Cardiac septum (tissue), 1 donor: ENCODE measurements at regions of chr20 and their contacts with region 1.

Region 1: DNA sequence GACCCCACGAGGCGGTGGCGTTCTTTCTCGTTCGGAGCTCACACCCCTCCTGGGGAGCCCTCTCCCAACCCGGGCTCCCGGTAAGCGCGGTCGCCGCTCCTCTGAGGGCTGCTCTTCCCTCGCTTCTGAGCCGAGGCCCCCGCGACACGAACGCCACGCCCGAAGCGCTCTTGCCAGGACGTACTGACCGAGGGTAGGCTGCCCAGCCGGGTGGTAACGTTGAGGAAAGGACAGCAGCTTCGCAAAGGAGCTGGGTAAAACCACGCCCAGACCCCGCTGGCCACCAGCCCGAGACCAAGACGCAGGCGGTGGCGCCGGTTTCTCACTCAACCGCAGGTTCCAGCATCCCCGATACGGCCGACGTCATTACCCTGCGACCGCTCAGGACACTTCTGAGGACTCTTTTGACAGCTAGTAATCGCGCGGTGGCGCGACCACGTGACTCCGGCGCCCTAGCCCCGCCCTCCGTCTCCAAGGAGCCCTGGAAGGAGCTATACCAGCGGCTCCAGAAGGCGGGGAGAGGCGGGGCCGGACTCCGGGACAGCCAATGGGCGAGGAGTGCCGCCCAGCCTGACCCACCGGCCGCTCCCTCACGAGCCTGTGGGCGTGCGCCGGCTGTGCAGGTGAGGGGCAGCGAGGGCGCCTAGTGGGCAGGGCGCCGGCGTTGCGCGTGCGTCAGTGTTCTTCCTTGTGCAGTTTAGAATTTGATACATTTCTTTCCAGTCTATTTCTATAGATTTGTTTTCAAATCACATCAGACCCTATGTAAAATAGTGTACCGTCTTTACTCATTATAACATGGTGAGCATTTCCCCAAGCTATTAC is 4.0 kb upstream of the GZF1 start:
- DNase-seq: peak; percentile 100

Region 2: DNA sequence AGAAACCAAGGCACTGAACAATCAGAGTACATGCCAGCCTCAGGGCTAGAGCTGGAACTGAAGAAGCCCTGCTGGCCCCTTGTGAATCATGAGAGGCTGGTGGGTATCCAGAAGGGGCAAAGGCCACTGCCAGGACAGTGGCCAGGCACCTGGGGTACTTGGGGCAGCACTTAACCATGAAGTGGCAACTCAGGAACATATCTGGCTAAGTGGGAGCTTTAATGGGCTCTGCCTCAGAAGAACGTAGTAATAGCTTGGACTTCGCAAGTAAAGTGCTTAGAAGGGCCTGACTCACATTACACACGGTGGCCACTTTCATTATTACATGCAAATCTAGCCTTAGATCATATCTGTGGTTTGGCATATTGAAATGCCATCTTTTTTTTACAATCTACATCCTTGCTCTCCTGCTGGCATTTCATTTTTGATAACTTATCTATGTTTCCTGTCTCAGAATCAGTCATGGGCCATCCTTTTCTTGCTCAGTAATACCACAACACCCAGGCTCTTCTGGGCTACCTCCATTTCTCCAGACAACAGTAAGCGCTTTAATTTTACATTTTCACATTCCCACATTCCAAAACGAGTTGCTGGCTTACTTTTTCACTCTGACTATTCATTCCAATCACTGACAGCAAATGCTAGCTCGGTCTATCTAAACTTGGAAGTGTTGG is 41.7 kb after region 1 on chr20:
- intact Hi-C with region 1: loop called (anchors 5 kb)
- DNase-seq: no peak

Region 3: DNA sequence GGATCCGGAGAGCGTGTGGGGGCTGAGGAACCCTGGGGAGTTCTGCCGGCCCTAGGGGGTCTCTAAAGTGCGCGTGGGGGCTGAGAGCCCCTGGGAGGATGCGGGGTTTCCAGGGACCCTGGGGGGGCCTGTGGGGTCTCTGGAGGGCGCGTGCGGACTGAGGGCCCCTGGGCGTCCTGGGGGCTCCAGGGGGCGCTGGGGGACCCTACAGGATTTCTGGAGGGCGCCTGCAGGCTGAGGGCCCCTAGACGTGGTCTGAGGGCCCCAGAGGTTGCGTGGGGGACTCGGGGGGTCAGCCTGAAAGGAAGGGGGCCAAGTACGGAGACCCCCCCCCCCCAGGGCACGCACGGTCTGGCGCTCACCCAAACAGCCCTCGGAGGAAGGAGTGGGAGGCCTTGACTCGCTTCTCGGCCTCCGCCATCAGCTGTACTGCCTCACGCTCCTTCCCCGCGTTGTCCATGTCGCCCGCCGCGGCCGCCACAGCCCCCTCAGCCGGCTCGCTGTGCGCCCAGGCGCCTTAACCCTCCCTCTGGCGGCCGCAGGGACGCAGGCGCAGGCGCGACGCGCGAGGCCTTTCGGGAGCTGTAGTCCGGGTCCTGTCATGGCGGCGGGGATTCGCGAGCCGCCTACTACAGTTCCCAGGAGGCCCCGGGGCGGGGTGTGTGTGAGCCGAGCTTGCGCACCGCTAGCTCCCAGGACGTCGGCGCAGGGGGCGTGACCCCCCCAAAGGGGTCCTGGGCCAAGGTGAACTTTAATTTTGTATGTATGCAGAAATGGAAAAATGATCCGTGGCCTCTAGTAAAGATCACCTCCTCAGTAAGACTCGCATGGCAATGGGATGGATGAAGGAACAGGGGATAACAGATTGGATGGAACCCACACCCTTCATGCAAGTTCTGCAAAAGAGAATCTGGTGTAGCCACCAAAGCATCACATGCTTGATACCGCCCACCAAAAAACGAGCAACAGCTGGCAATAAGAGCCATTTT is 63.3 kb after region 1 on chr20 and contains the start of gene NAPB:
- intact Hi-C with region 1: loop called (anchors 5 kb)
- DNase-seq: peak; percentile 98
- total RNA-seq, gene NAPB: 6.1 TPM